ENCODE measurements at regions of chr2 and their contacts with region 1.

Region 1: DNA sequence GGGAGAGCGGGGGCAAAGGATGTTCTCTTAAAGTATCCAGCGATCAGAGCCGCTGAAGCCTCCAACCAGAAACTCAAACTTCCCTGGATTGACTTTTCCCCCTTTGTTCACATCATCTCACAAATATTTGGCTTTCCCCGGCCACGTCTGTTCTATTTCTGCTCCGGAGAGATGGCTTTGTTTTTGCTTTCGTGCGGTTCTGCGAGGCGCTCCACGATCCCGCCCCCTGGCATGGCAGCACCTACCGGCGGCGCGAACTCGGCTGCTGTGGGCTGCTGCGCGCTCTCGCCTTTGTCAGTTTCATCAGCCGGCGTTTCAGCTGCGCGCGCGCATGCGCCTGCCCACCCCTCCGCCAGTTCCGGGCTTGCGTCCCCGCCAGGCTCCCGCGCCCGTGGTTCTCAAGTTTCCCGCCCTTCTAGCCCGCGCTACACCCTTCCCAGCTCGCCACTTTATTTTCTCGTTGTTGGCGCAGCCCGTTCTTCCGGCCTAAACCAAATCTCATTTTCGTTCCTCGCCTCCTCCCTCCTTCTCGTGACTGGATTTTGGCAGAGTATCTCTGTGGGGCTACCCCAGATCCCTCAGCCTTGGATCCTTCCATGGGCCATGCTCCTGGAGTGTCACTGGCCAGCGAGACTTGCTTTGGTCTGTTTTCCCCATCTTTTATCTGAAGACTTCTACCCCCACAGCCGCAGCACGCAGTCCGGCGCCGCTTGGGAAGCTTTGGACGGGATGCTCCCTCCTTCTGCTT is 98.0 kb downstream of the INSIG2 start:
- DNase-seq: peak; percentile 93
- H3K4me3 ChIP-seq: peak overlapping the region; percentile 60 to 70 (median 66)
- H3K27ac ChIP-seq: peak overlapping the region; percentile 83 to 88 (median 84)
- H3K4me1 ChIP-seq: peaks cover 0 to 11% (median 9%) of the 10 kb centered on the region in 4 donors
- H3K27me3 ChIP-seq: peaks cover 0 to 5% (median 0%) of the 10 kb centered on the region in 4 donors
- CTCF ChIP-seq: peak in 1 of 3 experiments; percentile 22
- EP300 ChIP-seq: no peak
- POLR2A ChIP-seq: no peak

Region 2: DNA sequence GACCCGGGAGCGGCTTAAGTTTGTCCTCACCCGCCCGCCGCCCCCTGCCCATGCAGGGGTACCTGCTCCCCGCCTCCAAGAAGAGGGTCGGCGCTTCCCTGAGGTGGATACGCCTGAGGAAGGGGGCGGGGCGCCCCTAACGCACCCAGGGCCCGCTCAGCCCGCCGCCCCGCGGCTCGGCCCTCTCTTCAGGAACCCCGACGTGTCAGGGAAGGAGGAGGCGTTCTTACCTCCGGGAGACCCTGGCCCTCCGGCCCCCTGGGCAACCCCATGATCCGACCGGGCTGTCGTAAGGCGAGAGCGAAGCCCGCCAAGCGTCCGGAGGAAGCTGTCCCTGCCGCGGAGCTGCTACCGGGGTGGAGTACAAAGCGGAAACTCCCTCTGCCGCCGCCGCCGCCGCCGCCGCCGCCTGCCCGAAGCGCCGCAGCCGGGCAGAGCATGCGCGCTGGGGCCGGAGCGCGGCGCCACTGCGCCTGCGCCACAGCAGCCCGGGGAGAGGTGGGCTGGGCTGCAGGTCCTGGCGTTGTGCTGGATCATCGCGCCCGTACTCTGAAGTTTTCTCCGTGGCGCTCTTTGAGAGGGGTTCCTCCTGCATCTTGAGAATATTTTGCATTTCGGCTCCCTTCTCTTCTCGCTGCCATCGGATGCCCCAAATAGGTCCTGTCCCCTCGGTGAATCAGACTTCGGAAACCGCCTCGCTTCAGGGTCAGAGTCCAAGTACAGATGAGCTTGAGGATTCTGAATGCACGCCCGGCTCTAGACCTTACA is 172.4 kb before region 1 on chr2 and contains the start of gene CCDC93:
- intact Hi-C with region 1: loop called (anchors 10 kb)
- DNase-seq: peak; percentile 94
- H3K4me3 ChIP-seq: peak within 1 kb of the TSS; percentile 97 to 100 (median 99)
- H3K27ac ChIP-seq: peak within 1 kb of the TSS; percentile 89 to 92 (median 91)
- H3K4me1 ChIP-seq: peaks cover 27 to 37% (median 32%) of the 10 kb centered on the region in 4 donors
- H3K27me3 ChIP-seq: no peaks in the 10 kb centered on the region
- CTCF ChIP-seq: peak in 1 of 3 experiments; percentile 7
- EP300 ChIP-seq: no peak
- POLR2A ChIP-seq: peak; percentile 25
- total RNA-seq, gene CCDC93: 14.4 to 17.0 (median 16.0) TPM

Region 3: DNA sequence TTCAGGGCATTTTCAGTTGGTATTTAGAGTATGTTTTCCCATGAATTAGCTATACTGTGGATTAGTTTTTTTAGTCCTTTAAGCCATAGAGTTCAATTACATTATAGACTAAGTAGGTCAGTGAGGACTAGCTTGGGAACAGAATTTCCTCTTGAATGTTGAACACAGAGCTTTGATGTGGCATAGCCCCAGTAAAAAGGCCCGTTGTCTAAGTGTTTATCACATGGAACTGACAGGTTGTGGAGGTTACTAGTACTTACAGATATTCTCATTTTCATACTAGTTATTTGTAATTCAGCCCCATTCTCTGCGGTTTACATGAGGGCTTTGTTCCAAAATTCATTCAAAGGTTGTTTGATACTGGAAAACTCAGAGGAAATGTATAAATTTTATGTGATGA is 91.8 kb before region 1 on chr2:
- intact Hi-C with region 1: loop called (anchors 5 kb)
- DNase-seq: no peak
- H3K4me3 ChIP-seq: no peak overlapping the region
- H3K27ac ChIP-seq: no peak overlapping the region
- H3K4me1 ChIP-seq: peaks cover 8 to 17% (median 13%) of the 10 kb centered on the region in 4 donors
- H3K27me3 ChIP-seq: no peaks in the 10 kb centered on the region
- CTCF ChIP-seq: no peak
- EP300 ChIP-seq: no peak
- POLR2A ChIP-seq: no peak

Measured in esophagus muscularis mucosa (tissue), 4 donors.